PC-9 (cell line): ENCODE measurements at regions of chr7 and their contacts with region 1.

Region 1: DNA sequence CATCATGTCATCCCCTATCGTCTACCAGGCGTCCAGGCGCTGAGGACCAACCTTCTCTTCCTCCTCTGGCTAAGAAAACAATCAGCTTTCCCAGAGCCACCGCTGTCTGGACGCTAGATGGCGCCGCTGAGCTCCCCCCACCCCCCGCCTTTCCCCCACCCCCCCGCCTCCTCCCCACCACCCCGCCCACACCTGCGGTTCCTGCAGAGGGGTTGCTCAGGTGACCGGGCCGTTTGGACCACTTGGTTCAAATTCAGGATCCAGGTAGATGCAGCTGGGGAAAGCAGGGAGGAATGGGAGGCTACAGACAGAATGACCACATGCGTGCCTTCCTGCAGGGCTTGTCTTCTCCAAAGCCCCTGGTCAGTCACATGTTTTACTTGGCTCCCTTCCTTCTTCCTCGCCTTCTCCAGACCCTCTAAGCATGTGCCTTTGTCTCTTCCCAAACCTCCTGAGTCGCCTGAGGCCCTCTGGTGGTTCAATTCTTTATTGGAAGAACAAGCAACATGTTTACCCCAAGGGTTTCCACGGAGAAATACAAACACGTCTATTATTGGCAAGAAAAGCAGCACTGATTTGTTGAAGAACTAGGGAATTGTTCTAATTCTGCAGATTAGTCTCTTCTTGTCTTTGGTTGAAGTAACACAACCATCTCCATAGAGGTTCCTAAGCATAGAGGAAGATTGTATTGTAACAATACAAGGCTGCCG is 24.7 kb downstream of the AOC1 start:
- DNase-seq: peak; percentile 67 to 68
- H3K4me3 ChIP-seq: no peak overlapping the region
- H3K27ac ChIP-seq: no peak overlapping the region
- H3K4me1 ChIP-seq: no peaks in the 10 kb centered on the region
- H3K27me3 ChIP-seq: peaks cover 41% of the 10 kb centered on the region
- CTCF ChIP-seq: peak; percentile 49

Region 2: GRCh38 chr7:150898475-150899011 is 21.6 kb after region 1 on chr7:
- CTCF ChIA-PET with region 1: interaction called, 4 read pairs
- POLR2A ChIA-PET with region 1: no interaction called
- intact Hi-C with region 1: loop called (anchors 1 kb)
- DNase-seq: peak in 1 of 2 experiments; percentile 82
- H3K4me3 ChIP-seq: no peak overlapping the region
- H3K27ac ChIP-seq: no peak overlapping the region
- H3K4me1 ChIP-seq: no peaks in the 10 kb centered on the region
- H3K27me3 ChIP-seq: peaks cover 29% of the 10 kb centered on the region
- CTCF ChIP-seq: peak; percentile 95

Region 3: DNA sequence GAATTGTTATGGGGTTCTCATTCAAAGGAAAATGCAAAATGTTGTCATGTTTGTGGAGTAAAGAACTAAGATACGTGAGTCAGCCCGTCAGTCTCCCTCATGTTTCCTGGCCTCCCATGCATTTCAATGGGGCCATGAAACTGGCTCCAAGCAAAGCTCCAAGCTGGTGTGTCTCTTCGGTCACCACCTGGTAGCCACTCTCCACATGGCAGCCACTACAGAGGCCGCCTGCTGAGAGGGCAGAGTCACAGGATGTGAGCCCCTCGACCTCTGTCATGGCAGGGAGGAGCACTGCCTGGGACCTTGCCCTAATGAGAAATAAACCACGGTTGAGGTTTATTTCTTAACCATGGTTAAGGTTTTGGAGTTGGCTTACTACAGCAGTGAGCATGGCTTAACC is 38.0 kb after region 1 on chr7:
- CTCF ChIA-PET with region 1: no interaction called
- POLR2A ChIA-PET with region 1: no interaction called
- intact Hi-C with region 1: loop called (anchors 1 kb)
- DNase-seq: no peak
- H3K4me3 ChIP-seq: no peak overlapping the region
- H3K27ac ChIP-seq: no peak overlapping the region
- H3K4me1 ChIP-seq: no peaks in the 10 kb centered on the region
- H3K27me3 ChIP-seq: peaks cover 95% of the 10 kb centered on the region
- CTCF ChIP-seq: no peak

Region 4: DNA sequence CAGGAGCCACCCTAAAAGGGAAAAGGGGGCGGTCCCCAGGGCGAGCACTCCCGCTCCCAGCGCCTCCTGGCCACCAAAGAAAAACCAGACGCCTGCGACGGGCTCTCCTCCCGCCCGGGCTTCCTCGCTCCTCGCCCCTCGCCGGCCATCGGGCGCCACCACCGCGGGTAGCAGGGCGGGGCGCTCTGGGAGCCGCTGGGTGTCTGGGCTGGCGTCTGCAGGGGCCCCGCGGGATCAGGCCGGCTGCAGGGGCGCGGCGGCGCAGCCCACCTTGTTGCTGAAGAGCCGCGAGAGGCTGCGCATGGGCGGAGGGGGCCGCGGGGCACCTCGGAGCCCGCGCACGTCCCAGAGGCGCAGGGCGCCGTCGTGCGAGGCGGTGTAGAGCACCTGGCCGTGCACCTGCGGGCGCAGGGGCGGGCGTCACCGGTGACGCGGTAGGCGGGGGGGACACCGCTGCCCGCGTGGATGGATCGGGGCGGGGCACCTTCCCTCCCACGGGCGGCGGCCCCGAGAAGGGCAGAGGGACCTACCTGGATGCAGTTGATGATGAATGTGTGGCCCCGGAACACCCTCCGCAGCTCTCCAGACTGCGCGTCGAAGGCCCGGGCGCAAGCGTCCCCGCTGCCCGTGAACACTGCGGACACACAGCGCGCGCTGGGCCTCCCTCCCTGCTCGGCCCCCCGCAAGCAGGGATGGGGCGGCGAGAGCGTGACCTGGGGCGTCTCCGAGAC is 504.5 kb after region 1 on chr7:
- CTCF ChIA-PET with region 1: no interaction called
- POLR2A ChIA-PET with region 1: no interaction called
- intact Hi-C with region 1: no loop called
- DNase-seq: no peak
- H3K4me3 ChIP-seq: no peak overlapping the region
- H3K27ac ChIP-seq: no peak overlapping the region
- H3K4me1 ChIP-seq: peaks cover 4% of the 10 kb centered on the region
- H3K27me3 ChIP-seq: no peaks in the 10 kb centered on the region
- CTCF ChIP-seq: no peak